Natural killer cell (primary cell): ENCODE measurements at regions of chr1 and their contacts with region 1.

Region 1: GRCh38 chr1:43367904-43368645 is at the start of gene ELOVL1:
- DNase-seq: peak; percentile 85 to 87
- ATAC-seq: peak; percentile 87 to 95 (median 90)
- H3K4me3 ChIP-seq: peak within 1 kb of the TSS; percentile 88
- H3K4me3 Mint-ChIP-seq: peak within 1 kb of the TSS; percentile 96
- H3K27ac ChIP-seq: peak within 1 kb of the TSS; percentile 80
- H3K27ac Mint-ChIP-seq: peak within 1 kb of the TSS; percentile 90 to 94
- H3K4me1 ChIP-seq: peaks cover 32% of the 10 kb centered on the region
- H3K4me1 Mint-ChIP-seq: peaks cover 35 to 53% of the 10 kb centered on the region in 2 donors
- H3K27me3 ChIP-seq: no peaks in the 10 kb centered on the region
- H3K27me3 Mint-ChIP-seq: no peaks in the 10 kb centered on the region
- CTCF ChIP-seq: no peak
- total RNA-seq, gene ELOVL1: 53.2 to 73.0 (median 67.5) TPM

Region 2: DNA sequence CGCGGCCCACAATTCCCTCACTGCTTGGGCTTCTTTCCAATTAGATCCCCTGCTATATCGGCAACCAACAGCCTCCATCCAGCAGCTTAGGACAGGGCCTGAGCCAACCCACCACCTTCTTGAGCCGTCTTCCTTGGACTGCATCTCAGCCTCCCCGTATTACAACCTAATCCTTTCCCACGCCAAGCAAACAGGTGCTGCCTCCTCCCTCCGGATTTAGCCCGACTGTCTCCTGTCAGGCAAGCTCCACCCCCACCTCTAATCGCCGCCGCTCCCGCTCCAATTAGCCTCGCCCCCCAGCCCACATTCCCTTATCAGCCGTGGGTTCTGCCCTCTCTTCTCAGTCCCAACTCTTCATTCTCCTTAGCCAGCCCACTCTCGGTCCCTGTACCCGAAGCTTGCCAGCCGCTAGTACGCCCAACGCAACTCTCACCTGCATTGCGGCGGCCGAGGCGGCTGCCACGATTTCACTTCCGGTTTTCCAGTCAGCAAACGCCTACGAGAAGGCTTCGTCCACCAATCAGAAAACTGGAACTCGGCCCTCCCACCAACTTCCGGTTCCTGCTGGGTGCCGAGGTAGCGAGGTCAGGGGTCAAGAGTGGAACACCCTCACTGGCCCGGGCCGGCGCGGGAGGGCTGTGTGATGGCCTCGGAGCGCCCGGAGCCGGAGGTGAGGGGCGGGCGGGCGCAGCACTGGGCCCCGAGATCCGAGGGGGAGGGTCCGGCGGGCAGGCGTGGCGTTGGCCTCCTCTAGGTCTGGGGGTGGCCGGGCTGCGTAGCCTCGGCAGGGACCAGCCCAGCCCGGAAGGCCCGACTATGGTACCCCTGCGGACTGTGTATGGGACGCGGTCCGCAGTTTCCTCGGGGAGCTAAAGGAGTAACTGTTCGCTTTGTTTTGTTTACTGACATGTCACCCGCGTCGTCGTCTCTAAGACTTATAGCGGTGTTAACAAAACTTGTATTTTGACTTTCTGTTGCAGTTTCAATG is 21.5 kb after region 1 on chr1 and contains the starts of genes MED8 and SZT2:
- intact Hi-C with region 1: loop called (anchors 1 kb)
- DNase-seq: peak; percentile 92 to 96
- ATAC-seq: peak; percentile 95 to 97 (median 96)
- H3K4me3 ChIP-seq: peak within 1 kb of the TSS; percentile 99
- H3K4me3 Mint-ChIP-seq: peak within 1 kb of the TSS; percentile 100
- H3K27ac ChIP-seq: peak within 1 kb of the TSS; percentile 86
- H3K27ac Mint-ChIP-seq: peak within 1 kb of the TSS; percentile 97 to 100
- H3K4me1 ChIP-seq: peaks cover 21% of the 10 kb centered on the region
- H3K4me1 Mint-ChIP-seq: peaks cover 38 to 49% of the 10 kb centered on the region in 2 donors
- H3K27me3 ChIP-seq: no peaks in the 10 kb centered on the region
- H3K27me3 Mint-ChIP-seq: no peaks in the 10 kb centered on the region
- CTCF ChIP-seq: no peak
- total RNA-seq, gene MED8: 17.8 to 26.8 (median 22.0) TPM
- total RNA-seq, gene SZT2: 103 to 128 (median 123) TPM